ENCODE measurements at regions of chr5 and their contacts with region 1.

Region 1: DNA sequence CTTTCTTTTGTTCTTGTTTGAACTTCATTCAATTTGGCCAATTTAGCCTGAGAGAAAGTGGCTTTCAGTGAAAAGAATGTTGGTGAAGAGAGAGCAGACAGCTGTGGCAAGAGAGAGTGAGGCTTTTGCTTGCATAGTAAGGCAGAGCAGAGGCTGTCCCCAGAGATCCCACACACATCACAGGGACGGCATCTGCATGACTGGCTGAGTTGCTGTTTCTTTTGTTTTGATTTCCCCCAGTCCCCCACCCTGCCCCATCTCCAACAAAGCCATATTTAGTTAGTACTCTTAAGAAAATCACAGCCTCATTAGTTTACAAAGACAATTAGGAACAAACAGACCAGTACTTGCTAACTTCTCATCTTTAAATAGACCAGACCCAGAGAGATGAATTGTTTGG is 363.9 kb upstream of the SEMA6A start:
- DNase-seq: no peak
- CTCF ChIP-seq: no peak

Region 2: GRCh38 chr5:116361171-116361967 is 577.1 kb before region 1 on chr5:
- in situ Hi-C with region 1: loop called (anchors 10 kb)
- DNase-seq: no peak
- CTCF ChIP-seq: no peak

Region 3: GRCh38 chr5:116885825-116886224 is 52.7 kb before region 1 on chr5:
- in situ Hi-C with region 1: no loop called
- DNase-seq: no peak
- CTCF ChIP-seq: no peak

Region 4: GRCh38 chr5:117131048-117131679 is 192.7 kb after region 1 on chr5:
- in situ Hi-C with region 1: no loop called
- DNase-seq: peak; percentile 26
- CTCF ChIP-seq: no peak

Region 5: GRCh38 chr5:117230375-117230774 is 291.9 kb after region 1 on chr5:
- in situ Hi-C with region 1: no loop called
- DNase-seq: no peak
- CTCF ChIP-seq: no peak